ENCODE measurements at regions of chr21 and their contacts with region 1.

Region 1: DNA sequence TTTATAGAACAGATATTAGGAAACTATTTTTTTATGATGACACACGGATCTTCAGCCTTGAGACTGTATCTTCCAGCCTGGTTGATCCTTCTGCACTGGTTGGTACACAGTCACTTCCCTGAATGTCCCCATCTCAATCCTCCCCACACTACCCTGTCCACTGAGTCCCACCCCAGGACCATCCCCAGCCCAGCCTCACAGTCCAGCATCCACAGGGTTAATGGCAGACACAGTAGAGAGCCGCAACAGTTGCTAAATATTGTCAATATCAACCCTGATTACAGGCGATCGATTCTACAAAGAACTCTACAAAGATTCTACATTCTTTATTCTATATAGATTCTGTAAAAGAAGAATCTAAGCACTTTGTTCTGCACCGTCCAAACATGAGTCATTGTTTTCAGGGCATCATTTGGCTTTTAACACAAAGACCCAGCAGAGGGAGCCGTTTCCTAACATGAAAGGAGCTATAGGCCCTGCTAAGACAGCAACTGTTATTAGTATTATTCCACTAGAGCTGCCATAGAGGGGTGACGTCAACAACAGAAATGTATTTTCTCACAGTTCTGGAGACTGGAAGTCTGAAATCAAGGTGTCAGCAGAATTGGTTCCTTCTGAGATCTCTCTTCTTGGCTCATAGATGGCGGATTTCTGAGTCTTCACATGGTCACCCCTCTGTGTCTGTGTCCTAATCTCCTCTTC is 30.1 kb upstream of the IFNAR2 start:
- DNase-seq: peak; percentile 85
- H3K4me3 Mint-ChIP-seq: no peak overlapping the region
- H3K27ac Mint-ChIP-seq: peak overlapping the region; percentile 39
- H3K4me1 Mint-ChIP-seq: peaks cover 24% of the 10 kb centered on the region
- H3K27me3 Mint-ChIP-seq: no peaks in the 10 kb centered on the region

Region 2: DNA sequence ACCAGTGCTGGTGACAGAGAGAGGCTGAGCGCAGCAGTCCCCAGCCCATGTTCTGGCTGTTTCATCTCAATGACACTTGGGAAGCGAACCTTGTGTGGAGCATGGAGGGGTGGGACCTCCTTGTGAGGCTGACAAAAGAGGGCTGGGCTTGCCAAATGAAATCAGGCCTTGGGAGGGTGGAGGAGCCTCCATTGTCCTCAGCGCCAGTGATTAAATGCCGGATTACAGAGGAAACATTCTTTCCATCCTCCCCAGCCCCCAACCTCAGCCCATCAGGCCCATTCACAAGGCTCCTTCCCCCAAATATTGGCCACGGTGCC is 364.8 kb before region 1 on chr21:
- CTCF ChIA-PET with region 1: interaction called, 44 read pairs
- POLR2A ChIA-PET with region 1: interaction called, 4 read pairs
- intact Hi-C with region 1: loop called (anchors 5 kb)
- DNase-seq: no peak
- H3K4me3 Mint-ChIP-seq: no peak overlapping the region
- H3K27ac Mint-ChIP-seq: no peak overlapping the region
- H3K4me1 Mint-ChIP-seq: no peaks in the 10 kb centered on the region
- H3K27me3 Mint-ChIP-seq: peaks cover 3% of the 10 kb centered on the region

Region 3: GRCh38 chr21:32940079-32941014 is 259.3 kb before region 1 on chr21:
- CTCF ChIA-PET with region 1: interaction called, 34 read pairs
- POLR2A ChIA-PET with region 1: no interaction called
- intact Hi-C with region 1: loop called (anchors 2 kb)
- DNase-seq: peak; percentile 44
- H3K4me3 Mint-ChIP-seq: no peak overlapping the region
- H3K27ac Mint-ChIP-seq: no peak overlapping the region
- H3K4me1 Mint-ChIP-seq: no peaks in the 10 kb centered on the region
- H3K27me3 Mint-ChIP-seq: peaks cover 3% of the 10 kb centered on the region

Region 4: DNA sequence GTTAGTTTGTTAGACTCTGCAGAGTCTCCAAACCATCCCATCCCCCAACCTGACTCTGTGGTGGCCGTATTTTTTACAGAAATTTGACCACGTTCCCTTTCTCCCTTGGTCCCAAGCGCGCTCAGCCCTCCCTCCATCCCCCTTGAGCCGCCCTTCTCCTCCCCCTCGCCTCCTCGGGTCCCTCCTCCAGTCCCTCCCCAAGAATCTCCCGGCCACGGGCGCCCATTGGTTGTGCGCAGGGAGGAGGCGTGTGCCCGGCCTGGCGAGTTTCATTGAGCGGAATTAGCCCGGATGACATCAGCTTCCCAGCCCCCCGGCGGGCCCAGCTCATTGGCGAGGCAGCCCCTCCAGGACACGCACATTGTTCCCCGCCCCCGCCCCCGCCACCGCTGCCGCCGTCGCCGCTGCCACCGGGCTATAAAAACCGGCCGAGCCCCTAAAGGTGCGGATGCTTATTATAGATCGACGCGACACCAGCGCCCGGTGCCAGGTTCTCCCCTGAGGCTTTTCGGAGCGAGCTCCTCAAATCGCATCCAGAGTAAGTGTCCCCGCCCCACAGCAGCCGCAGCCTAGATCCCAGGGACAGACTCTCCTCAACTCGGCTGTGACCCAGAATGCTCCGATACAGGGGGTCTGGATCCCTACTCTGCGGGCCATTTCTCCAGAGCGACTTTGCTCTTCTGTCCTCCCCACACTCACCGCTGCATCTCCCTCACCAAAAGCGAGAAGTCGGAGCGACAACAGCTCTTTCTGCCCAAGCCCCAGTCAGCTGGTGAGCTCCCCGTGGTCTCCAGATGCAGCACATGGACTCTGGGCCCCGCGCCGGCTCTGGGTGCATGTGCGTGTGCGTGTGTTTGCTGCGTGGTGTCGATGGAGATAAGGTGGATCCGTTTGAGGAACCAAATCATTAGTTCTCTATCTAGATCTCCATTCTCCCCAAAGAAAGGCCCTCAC is 173.9 kb before region 1 on chr21 and contains the start of gene OLIG2:
- CTCF ChIA-PET with region 1: interaction called, 3 read pairs
- POLR2A ChIA-PET with region 1: no interaction called
- intact Hi-C with region 1: loop called (anchors 5 kb)
- DNase-seq: peak; percentile 15
- H3K4me3 Mint-ChIP-seq: peak within 1 kb of the TSS; percentile 18
- H3K27ac Mint-ChIP-seq: peak within 1 kb of the TSS; percentile 0
- H3K4me1 Mint-ChIP-seq: peaks cover 48% of the 10 kb centered on the region
- H3K27me3 Mint-ChIP-seq: peaks cover 78% of the 10 kb centered on the region
- total RNA-seq, gene OLIG2: not detected

Region 5: GRCh38 chr21:33185852-33186251 is 13.8 kb before region 1 on chr21:
- CTCF ChIA-PET with region 1: interaction called, 29 read pairs
- POLR2A ChIA-PET with region 1: no interaction called
- intact Hi-C with region 1: no loop called
- DNase-seq: no peak
- H3K4me3 Mint-ChIP-seq: no peak overlapping the region
- H3K27ac Mint-ChIP-seq: peak overlapping the region; percentile 57
- H3K4me1 Mint-ChIP-seq: peaks cover 39% of the 10 kb centered on the region
- H3K27me3 Mint-ChIP-seq: no peaks in the 10 kb centered on the region

Region 6: DNA sequence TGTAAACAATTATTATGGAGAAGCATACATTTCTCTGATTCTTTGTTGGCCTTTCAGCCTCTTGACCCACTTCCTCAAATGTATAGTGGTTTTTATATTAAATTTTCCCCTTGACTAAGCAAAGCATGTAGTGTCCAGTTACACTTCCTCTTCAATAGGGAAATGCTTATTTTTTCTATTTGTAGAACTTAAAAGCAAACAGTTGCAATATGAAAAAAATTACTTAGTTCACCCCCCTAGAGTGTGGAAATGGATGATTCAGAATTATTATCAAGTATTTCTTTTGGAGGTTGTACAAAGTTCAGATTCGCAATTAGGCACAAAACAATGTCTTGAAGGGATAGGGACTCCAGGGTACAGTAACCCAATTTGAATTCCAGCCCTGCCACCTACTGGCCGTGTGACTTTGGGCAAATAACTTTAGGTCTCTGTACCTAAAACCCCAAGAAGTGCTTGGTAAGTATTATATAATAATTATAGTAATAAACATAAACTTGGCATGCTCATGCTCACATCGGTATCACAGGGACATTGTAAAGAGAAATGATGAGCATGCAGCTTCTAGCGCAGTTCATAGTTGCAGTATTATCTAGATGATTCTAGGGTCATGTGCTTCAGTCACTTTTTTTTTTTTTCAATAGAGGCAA is 174.9 kb after region 1 on chr21:
- CTCF ChIA-PET with region 1: interaction called, 18 read pairs
- POLR2A ChIA-PET with region 1: no interaction called
- intact Hi-C with region 1: loop called (anchors 1 kb)
- DNase-seq: peak; percentile 73
- H3K4me3 Mint-ChIP-seq: no peak overlapping the region
- H3K27ac Mint-ChIP-seq: no peak overlapping the region
- H3K4me1 Mint-ChIP-seq: peaks cover 12% of the 10 kb centered on the region
- H3K27me3 Mint-ChIP-seq: peaks cover 6% of the 10 kb centered on the region

Region 7: DNA sequence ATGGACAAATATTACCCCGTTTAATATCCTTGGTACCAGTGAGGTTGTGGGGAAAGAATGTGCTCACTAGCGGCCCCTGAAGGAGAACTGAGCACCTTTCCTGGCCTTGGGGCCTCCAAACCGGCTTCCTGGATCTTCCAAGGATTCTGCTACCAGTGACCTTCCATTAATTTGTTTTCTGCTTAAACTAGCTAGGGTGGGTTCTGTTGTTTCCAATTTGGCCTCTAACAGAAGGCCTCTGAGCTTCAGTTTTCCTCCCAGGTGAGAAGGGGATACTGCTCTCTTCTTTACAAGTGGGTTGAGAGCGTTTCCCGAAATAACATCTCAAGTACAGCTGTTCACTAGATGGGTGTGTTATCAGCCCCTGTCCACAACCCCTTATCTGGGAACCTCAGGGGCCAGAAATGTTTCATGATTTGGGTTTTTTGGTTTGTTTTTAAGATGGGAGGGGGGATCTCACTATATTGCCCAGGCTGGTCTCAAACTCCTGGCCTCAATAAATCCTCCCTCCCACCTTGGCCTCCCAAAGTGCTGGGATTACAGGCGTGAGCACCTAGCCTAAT is 186.6 kb after region 1 on chr21:
- CTCF ChIA-PET with region 1: interaction called, 18 read pairs
- POLR2A ChIA-PET with region 1: no interaction called
- intact Hi-C with region 1: no loop called
- DNase-seq: no peak
- H3K4me3 Mint-ChIP-seq: no peak overlapping the region
- H3K27ac Mint-ChIP-seq: no peak overlapping the region
- H3K4me1 Mint-ChIP-seq: peaks cover 41% of the 10 kb centered on the region
- H3K27me3 Mint-ChIP-seq: peaks cover 16% of the 10 kb centered on the region